PC-9 (cell line): ENCODE measurements at regions of chr17 and their contacts with region 1.

Region 1: DNA sequence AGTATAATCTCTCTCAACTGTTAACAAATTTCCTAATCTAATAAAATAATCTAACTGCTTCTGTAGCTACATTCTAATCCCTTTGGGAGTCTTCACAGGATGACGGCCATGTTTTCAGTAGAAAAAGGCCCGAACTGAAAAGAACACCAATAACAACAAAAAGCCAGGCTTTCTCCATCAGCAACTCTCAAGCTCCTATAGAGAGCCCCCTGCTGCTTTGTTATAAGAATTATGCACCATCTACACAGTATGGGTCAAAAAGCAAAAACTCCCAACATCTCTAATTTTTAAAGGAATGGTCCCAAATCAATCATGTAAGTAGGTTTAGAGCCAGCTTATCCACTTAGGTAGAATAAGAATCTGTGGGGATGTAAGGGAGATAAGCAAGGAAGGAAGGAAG is 163.6 kb upstream of the C17orf78 start:
- DNase-seq: no peak
- H3K4me3 ChIP-seq: no peak overlapping the region
- H3K27ac ChIP-seq: no peak overlapping the region
- H3K4me1 ChIP-seq: no peaks in the 10 kb centered on the region
- H3K27me3 ChIP-seq: no peaks in the 10 kb centered on the region
- CTCF ChIP-seq: no peak

Region 2: DNA sequence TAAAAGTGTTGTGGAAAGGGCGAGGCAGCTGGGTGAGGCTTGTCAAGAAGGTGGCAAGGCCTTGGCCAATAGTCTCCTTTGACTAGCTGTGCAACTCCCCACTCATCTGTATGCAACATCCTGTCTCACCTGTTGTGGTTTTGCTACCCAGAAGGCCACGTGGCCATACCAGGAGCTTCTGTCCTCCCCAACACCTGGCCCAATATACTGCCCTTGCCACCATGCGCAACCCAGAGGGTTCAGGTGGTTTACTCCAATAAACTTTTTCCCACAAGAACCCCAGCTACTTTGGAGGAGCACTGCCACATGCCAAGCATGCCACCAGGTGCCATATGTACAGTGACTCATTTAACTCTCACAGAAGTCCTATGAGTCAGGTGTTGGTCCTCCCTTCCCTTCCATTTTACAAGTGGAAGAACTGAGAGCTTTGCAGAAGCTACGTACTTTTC is 687.7 kb before region 1 on chr17:
- CTCF ChIA-PET with region 1: no interaction called
- POLR2A ChIA-PET with region 1: no interaction called
- intact Hi-C with region 1: no loop called
- DNase-seq: peak; percentile 9 to 42
- H3K4me3 ChIP-seq: no peak overlapping the region
- H3K27ac ChIP-seq: no peak overlapping the region
- H3K4me1 ChIP-seq: no peaks in the 10 kb centered on the region
- H3K27me3 ChIP-seq: no peaks in the 10 kb centered on the region
- CTCF ChIP-seq: no peak

Region 3: DNA sequence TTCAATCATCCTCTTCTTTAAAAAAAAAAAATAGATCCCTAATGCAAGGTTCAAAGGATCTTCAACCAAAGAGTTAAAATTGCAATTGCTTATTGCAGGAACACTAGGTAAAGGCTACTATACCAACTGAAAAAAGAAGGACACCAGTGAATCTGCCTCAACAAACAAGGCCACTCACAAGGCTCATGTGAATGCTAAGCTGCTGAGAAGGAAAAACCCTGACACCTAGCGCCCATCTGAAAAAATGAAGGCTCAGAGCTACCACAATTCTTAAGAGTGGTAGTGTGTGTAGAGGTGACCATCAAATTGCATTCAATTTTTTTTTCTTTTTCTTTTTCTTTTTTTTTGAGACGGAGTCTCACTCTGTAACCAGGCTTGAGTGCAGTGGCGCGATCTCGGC is 38.0 kb before region 1 on chr17:
- CTCF ChIA-PET with region 1: no interaction called
- POLR2A ChIA-PET with region 1: no interaction called
- intact Hi-C with region 1: no loop called
- DNase-seq: no peak
- H3K4me3 ChIP-seq: no peak overlapping the region
- H3K27ac ChIP-seq: no peak overlapping the region
- H3K4me1 ChIP-seq: peaks cover 3% of the 10 kb centered on the region
- H3K27me3 ChIP-seq: no peaks in the 10 kb centered on the region
- CTCF ChIP-seq: no peak

Region 4: DNA sequence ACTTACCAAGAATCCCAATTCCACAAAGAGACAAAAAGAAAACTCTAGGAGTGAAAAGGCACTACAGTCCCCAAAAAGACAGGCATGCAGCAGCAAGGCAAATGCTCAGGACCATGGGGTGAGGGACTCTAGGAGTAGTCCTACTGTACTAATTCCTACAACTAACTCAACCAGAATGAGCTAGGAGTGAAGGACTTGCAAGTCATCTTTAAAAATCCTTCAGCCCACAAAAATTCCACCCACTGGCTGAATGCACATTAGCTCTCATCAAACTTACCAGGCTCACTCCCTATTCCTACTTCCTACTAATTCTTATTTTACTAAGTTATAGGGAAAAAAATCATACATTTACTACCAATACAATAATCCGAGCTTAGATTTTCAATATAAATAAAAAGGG is 21.9 kb after region 1 on chr17:
- CTCF ChIA-PET with region 1: interaction called, 16 read pairs
- POLR2A ChIA-PET with region 1: no interaction called
- intact Hi-C with region 1: no loop called
- DNase-seq: no peak
- H3K4me3 ChIP-seq: no peak overlapping the region
- H3K27ac ChIP-seq: no peak overlapping the region
- H3K4me1 ChIP-seq: no peaks in the 10 kb centered on the region
- H3K27me3 ChIP-seq: no peaks in the 10 kb centered on the region
- CTCF ChIP-seq: no peak